ENCODE measurements at regions of chr16 and their contacts with region 1.

Region 1: GRCh38 chr16:62225697-62226280 is 189.6 kb upstream of the CDH8 start:
- DNase-seq: peak; percentile 89 to 93
- H3K4me3 ChIP-seq: no peak overlapping the region
- H3K4me3 Mint-ChIP-seq: peak overlapping the region; percentile 52
- H3K27ac Mint-ChIP-seq: no peak overlapping the region
- H3K4me1 ChIP-seq: no peaks in the 10 kb centered on the region
- H3K4me1 Mint-ChIP-seq: no peaks in the 10 kb centered on the region
- H3K27me3 ChIP-seq: no peaks in the 10 kb centered on the region; the same call in 1 of the 2 replicates
- H3K27me3 Mint-ChIP-seq: no peaks in the 10 kb centered on the region
- CTCF ChIP-seq: peak; percentile 57 to 65

Region 2: DNA sequence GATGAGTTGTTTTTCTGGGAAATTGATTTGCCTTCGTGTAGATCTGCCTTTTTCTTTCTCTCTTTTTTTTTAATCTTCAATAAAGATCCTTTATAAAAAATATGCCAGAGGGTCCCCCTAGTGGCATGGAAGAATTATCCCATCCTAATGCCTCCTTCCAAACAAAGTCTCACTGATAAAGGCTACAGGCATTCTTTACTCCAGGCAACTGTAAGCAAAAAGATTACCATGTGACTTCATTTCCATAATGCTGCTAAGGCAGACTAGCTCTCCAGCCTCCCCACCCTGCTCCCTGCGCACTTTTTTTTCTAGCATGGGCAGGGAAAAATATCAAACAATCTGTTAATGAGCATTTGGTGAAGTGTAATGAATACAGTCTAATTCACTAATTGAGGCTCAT is 30.6 kb after region 1 on chr16:
- CTCF ChIA-PET with region 1: no interaction called
- POLR2A ChIA-PET with region 1: no interaction called
- intact Hi-C with region 1: loop called (anchors 1 kb)
- DNase-seq: peak in 1 of 2 experiments; percentile 6
- H3K4me3 ChIP-seq: no peak overlapping the region
- H3K4me3 Mint-ChIP-seq: no peak overlapping the region
- H3K27ac Mint-ChIP-seq: no peak overlapping the region
- H3K4me1 ChIP-seq: no peaks in the 10 kb centered on the region
- H3K4me1 Mint-ChIP-seq: no peaks in the 10 kb centered on the region
- H3K27me3 ChIP-seq: no peaks in the 10 kb centered on the region
- H3K27me3 Mint-ChIP-seq: no peaks in the 10 kb centered on the region
- CTCF ChIP-seq: peak; percentile 26 to 57

Region 3: DNA sequence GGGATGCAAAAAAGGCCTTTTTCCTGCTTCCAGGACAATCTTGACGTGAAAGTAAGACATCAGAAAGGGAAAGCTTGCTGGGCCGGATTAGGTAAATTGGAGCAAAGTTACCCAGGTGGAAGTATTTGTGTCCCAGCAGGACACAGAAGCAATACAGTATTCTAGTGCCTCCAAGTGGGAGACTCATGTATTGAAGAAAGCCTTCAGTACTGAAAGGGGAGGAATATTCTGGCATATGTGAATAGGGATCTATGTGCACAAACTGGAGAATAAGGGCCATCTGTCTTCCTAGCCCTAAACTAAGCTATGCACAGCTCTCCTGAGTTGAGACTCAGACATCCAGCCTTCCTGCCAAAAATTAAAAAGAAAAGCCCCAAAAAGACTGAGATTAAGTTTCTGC is 137.7 kb after region 1 on chr16:
- CTCF ChIA-PET with region 1: no interaction called
- POLR2A ChIA-PET with region 1: no interaction called
- intact Hi-C with region 1: loop called (anchors 1 kb)
- DNase-seq: peak in 1 of 2 experiments; percentile 1
- H3K4me3 ChIP-seq: no peak overlapping the region
- H3K4me3 Mint-ChIP-seq: no peak overlapping the region
- H3K27ac Mint-ChIP-seq: no peak overlapping the region
- H3K4me1 ChIP-seq: no peaks in the 10 kb centered on the region
- H3K4me1 Mint-ChIP-seq: no peaks in the 10 kb centered on the region
- H3K27me3 ChIP-seq: no peaks in the 10 kb centered on the region
- H3K27me3 Mint-ChIP-seq: peaks cover 2% of the 10 kb centered on the region
- CTCF ChIP-seq: no peak

Region 4: DNA sequence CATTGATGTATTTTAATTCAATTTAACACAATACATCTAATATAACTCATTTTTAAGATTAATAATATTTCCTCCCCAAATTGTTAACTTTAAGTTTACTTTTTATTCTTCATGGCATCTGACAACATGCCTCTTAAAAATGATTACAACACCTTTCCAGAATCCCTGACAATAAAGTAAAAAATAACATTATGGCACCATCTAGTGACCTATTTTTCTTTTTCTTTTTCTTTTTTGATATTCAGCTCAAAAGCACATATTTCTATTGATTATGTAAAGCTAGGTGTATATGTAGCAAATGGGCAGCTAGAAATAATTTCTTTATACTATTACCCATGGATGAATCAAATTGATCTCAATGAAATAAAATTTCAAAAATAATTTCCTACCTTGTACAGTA is 644.8 kb after region 1 on chr16:
- CTCF ChIA-PET with region 1: interaction called, 4 read pairs
- POLR2A ChIA-PET with region 1: no interaction called
- intact Hi-C with region 1: loop called (anchors 1 kb)
- DNase-seq: no peak
- H3K4me3 ChIP-seq: no peak overlapping the region
- H3K4me3 Mint-ChIP-seq: no peak overlapping the region
- H3K27ac Mint-ChIP-seq: no peak overlapping the region
- H3K4me1 ChIP-seq: no peaks in the 10 kb centered on the region
- H3K4me1 Mint-ChIP-seq: no peaks in the 10 kb centered on the region
- H3K27me3 ChIP-seq: no peaks in the 10 kb centered on the region
- H3K27me3 Mint-ChIP-seq: no peaks in the 10 kb centered on the region
- CTCF ChIP-seq: no peak

Region 5: DNA sequence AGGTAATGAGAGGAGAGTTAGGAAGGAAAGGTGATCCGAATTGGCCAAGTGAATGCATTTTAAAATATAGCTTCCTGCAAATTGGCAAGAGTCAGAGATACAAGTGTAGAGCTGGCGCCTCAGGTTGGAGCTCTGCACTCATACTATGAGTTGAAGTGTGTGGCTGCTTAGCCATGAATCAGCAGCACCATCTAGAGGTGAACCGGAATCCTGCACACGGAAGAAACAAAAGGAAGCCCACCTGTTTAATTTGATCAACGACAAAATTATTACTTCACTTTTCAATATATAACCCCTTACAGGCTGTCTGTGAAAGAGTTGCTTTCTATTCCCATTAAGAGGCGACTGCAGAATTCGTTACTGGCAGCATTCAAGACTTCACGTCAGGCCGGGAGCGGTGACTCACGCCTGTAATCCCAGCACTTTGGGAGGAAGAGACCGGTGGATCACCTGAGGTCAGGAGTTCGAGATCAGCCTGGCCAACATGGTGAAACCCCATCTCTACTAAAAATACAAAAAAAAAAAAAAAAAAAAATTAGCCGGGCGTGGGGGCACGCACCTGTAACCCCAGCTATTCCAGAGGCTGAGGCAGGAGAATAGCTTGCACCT is 1064.2 kb after region 1 on chr16:
- CTCF ChIA-PET with region 1: interaction called, 31 read pairs
- POLR2A ChIA-PET with region 1: no interaction called
- intact Hi-C with region 1: no loop called
- DNase-seq: peak; percentile 53 to 67
- H3K4me3 ChIP-seq: no peak overlapping the region
- H3K4me3 Mint-ChIP-seq: no peak overlapping the region
- H3K27ac Mint-ChIP-seq: no peak overlapping the region
- H3K4me1 ChIP-seq: no peaks in the 10 kb centered on the region
- H3K4me1 Mint-ChIP-seq: no peaks in the 10 kb centered on the region
- H3K27me3 ChIP-seq: peaks cover 1% of the 10 kb centered on the region; the same call in 1 of the 2 replicates
- H3K27me3 Mint-ChIP-seq: peaks cover 4% of the 10 kb centered on the region
- CTCF ChIP-seq: peak; percentile 89 to 93

Measured in Caco-2 (cell line).